Ascending aorta (tissue), 2 donors: ENCODE measurements at regions of chr17 and their contacts with region 1.

Region 1: GRCh38 chr17:78250891-78251794 is 19.7 kb downstream of the TMEM235 start:
- DNase-seq: peak in 1 of 2 donors; percentile 87
- H3K4me3 ChIP-seq: no peak overlapping the region
- H3K27ac ChIP-seq: no peak overlapping the region
- H3K4me1 ChIP-seq: peaks cover 0 to 5% of the 10 kb centered on the region in 2 donors
- H3K27me3 ChIP-seq: no peaks in the 10 kb centered on the region
- CTCF ChIP-seq: peak; percentile 98 to 100 (median 100)

Region 2: GRCh38 chr17:77354420-77355241 is 896.5 kb before region 1 on chr17:
- intact Hi-C with region 1: no loop called
- DNase-seq: peak in 1 of 2 donors; percentile 86
- H3K4me3 ChIP-seq: no peak overlapping the region
- H3K27ac ChIP-seq: peak overlapping the region in 1 of 2 donors; percentile 44
- H3K4me1 ChIP-seq: no peaks in the 10 kb centered on the region
- H3K27me3 ChIP-seq: no peaks in the 10 kb centered on the region
- CTCF ChIP-seq: no peak

Region 3: DNA sequence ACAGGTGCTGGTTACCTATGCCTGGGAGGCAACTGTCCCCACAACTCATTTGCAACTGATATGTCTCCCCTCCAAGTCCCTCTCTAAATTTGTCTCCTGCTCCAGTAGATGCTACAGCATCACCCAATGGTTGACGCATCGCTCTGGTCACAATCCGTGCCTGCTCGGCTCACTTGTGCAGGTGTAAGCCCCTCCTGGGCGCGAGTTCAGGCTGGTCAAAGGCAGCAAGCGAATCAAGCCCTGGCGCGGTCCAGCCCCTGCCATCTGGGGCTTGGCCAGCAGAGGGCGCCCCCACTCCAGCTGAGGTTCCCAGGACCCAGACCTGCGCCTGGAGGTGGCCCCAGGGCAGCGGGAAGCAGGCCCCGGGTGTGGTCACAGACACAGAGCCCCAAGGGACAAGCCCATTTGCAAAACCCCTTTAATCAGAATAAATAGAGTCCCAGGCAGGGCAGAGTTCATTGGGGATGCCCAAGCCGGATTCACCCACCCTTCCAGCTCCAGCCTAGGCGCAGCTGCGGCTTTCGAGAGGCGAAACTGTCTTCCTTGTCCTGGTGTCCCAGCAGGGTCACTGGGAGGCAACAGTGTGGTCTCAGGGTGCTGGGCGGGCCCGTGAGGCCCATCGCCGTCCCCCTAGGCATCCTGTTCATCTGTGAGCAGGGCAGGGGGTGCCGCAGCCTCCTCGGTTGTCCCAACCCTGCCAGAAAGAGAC is 138.5 kb before region 1 on chr17:
- intact Hi-C with region 1: loop called (anchors 1 kb)
- DNase-seq: peak in 1 of 2 donors; percentile 82
- H3K4me3 ChIP-seq: no peak overlapping the region
- H3K27ac ChIP-seq: no peak overlapping the region
- H3K4me1 ChIP-seq: peaks cover 0 to 4% of the 10 kb centered on the region in 2 donors
- H3K27me3 ChIP-seq: no peaks in the 10 kb centered on the region
- CTCF ChIP-seq: peak; percentile 97 to 100 (median 98)

Region 4: DNA sequence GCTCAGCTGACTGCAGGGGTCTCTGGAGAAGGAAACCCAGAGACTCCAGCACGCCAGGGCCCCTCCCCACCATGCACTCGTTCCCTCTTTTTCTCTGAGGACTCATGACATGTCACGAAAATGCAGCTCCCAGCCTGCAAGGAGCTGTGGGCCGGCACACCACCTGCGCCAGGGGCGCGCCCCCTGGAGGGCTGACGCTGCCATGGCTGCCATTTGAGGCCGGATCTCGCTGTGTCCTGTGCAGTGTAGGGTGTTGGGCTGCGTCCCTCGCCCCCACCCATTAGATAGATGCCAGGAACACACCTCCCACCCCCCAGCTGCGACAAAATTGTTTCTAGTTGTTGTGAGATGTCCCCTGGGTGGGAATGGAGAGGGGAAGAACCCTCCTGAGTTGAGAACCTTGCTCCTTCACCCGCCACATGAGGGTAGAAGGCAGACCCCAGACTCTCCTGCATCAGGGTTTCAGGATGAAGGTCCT is 74.6 kb before region 1 on chr17:
- intact Hi-C with region 1: loop called (anchors 1 kb)
- DNase-seq: peak in 1 of 2 donors; percentile 84
- H3K4me3 ChIP-seq: no peak overlapping the region
- H3K27ac ChIP-seq: peak overlapping the region; percentile 81 to 89
- H3K4me1 ChIP-seq: peaks cover 10 to 73% of the 10 kb centered on the region in 2 donors
- H3K27me3 ChIP-seq: no peaks in the 10 kb centered on the region
- CTCF ChIP-seq: peak; percentile 64 to 81 (median 78)

Region 5: GRCh38 chr17:78231991-78232858 is 18.9 kb before region 1 on chr17:
- intact Hi-C with region 1: no loop called
- DNase-seq: no peak
- H3K4me3 ChIP-seq: no peak overlapping the region
- H3K27ac ChIP-seq: no peak overlapping the region
- H3K4me1 ChIP-seq: no peaks in the 10 kb centered on the region
- H3K27me3 ChIP-seq: peaks cover 15% of the 10 kb centered on the region
- CTCF ChIP-seq: no peak

Region 6: GRCh38 chr17:78289802-78290363 is 38.7 kb after region 1 on chr17:
- intact Hi-C with region 1: no loop called
- DNase-seq: peak in 1 of 2 donors; percentile 85
- H3K4me3 ChIP-seq: no peak overlapping the region
- H3K27ac ChIP-seq: no peak overlapping the region
- H3K4me1 ChIP-seq: no peaks in the 10 kb centered on the region
- H3K27me3 ChIP-seq: no peaks in the 10 kb centered on the region
- CTCF ChIP-seq: peak; percentile 77 to 79 (median 77)

Region 7: DNA sequence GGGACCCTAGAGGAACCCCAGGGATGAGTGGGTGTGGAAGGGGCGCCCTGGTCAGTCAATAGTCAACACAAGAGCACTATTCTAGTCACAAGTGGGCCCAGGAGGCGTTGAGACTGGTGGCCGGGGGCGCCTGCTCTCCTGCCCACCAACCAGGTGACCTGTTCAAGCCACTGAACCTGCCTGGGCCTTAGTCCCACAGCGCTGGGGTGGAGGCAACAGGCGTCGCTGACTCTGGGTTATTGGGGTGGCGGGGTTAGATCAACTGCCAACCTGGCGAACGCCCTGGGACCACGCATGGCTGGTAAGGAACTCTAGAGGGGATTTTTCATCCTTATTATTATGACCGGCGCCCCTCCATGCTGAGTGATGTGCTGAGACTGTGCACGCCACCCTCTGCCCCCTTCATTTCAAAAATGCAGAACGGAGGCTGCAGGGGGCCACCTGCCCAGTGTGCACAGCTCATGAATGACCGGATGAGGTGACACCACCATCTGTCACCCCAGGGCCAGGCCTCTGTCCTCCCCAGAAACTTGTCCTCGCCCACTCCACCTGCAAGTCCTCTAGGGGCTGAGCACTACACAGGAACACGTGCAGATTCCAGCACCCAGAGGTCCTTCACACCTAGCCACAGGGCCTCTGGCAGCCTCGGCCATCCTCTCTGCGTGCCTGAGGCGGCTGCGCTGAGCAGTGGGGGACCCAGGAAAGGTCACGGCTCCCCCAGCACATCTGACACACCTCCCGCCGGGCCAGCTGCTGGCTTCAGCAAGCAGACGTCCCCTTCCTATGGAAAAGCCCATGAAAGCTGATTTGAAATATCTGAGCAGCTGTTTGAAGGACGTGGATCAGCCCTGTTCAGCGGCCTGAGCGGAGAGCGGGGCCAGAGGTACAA is 377.6 kb after region 1 on chr17:
- intact Hi-C with region 1: no loop called
- DNase-seq: no peak
- H3K4me3 ChIP-seq: no peak overlapping the region
- H3K27ac ChIP-seq: no peak overlapping the region
- H3K4me1 ChIP-seq: no peaks in the 10 kb centered on the region
- H3K27me3 ChIP-seq: no peaks in the 10 kb centered on the region
- CTCF ChIP-seq: no peak